B cell (primary cell): ENCODE measurements at regions of chr10 and their contacts with region 1.

Region 1: GRCh38 chr10:93288654-93289634 is 193.2 kb downstream of the MYOF start:
- DNase-seq: peak; percentile 60
- ATAC-seq: no peak
- H3K4me3 ChIP-seq: no peak overlapping the region
- H3K4me3 Mint-ChIP-seq: no peak overlapping the region
- H3K27ac ChIP-seq: no peak overlapping the region
- H3K27ac Mint-ChIP-seq: no peak overlapping the region
- H3K4me1 ChIP-seq: no peaks in the 10 kb centered on the region
- H3K4me1 Mint-ChIP-seq: no peaks in the 10 kb centered on the region
- H3K27me3 ChIP-seq: no peaks in the 10 kb centered on the region
- H3K27me3 Mint-ChIP-seq: no peaks in the 10 kb centered on the region
- CTCF ChIP-seq: peak; percentile 83

Region 2: DNA sequence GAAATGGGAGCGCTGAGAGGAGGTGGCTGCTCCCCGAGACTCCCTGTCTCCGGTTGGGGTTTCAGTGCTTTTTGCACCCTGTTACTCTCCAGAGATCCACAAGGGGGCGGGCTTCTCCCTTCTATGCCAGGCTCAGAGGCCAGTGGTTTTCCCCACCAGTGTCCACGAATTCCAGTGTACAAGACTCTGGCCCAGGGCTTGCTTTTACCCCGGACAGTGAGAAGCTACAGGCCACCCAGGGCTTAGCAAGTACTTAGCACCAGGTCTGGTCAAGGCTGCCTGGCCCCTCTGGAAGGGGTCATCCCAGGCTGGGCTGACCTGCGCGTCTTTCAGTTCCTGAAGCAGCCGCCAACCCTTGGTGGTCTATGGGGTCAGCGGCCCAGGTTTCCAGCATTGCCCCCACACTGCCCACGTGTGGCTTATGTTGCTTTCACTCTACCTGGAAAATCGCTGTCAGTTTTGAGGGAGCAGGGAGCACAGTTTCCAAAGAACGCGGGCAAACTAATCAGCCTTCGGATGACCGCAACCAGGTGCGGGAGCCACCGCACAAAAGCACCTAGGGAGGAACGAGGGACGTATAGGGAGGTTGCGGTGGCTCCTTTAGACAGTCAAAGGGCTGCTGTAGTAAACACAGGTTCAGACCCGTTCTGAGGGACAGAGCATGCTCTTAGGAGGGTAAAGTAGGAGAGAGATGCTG is 208.4 kb before region 1 on chr10:
- CTCF ChIA-PET with region 1: interaction called, 6 read pairs
- POLR2A ChIA-PET with region 1: no interaction called
- intact Hi-C with region 1: loop called (anchors 1 kb)
- DNase-seq: peak; percentile 64
- ATAC-seq: peak; percentile 67
- H3K4me3 ChIP-seq: no peak overlapping the region
- H3K4me3 Mint-ChIP-seq: no peak overlapping the region
- H3K27ac ChIP-seq: no peak overlapping the region
- H3K27ac Mint-ChIP-seq: no peak overlapping the region
- H3K4me1 ChIP-seq: peaks cover 0 to 5% of the 10 kb centered on the region in 2 donors
- H3K4me1 Mint-ChIP-seq: peaks cover 8% of the 10 kb centered on the region
- H3K27me3 ChIP-seq: peaks cover 0 to 28% (median 12%) of the 10 kb centered on the region in 4 experiments
- H3K27me3 Mint-ChIP-seq: peaks cover 51% of the 10 kb centered on the region
- CTCF ChIP-seq: peak; percentile 79

Region 3: DNA sequence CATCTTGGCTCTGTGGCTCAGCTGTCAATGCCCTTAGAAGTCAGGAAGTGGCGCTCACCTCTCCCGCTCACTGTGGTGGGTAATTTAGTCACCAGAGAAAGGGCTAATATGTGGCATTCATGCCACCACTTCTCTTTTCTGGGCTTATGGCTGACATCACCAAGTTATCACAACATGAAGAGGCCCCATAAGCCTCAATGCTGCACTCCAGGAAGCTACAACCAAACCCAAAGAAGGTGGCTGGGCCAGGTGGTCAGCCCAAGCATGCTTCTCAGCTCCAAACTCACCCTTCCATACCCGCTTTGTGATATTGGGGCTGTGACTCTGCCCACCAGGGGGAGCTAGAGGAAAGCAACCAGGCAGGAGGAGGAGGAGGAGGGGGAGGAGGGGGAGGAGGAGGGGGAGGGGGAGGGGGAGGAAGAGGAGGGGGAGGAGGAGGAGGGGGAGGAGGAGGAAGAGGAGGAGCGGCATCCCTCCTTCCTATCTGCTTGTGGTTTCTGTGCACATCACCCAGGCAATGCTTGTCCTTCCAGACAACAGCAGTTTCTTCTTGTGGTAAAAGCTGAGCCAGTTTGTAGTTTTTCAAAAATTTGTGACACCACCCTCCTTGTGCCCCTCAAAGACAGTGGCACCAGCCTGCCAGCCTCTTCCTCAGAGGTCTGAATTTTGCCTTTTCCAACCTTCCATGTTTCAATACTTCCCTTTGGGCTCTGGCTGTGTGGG is 173.1 kb before region 1 on chr10:
- CTCF ChIA-PET with region 1: interaction called, 23 read pairs
- POLR2A ChIA-PET with region 1: interaction called, 6 read pairs
- intact Hi-C with region 1: no loop called
- DNase-seq: peak; percentile 77
- ATAC-seq: peak; percentile 83
- H3K4me3 ChIP-seq: no peak overlapping the region
- H3K4me3 Mint-ChIP-seq: no peak overlapping the region
- H3K27ac ChIP-seq: peak overlapping the region in 1 of 2 donors; percentile 10
- H3K27ac Mint-ChIP-seq: peak overlapping the region; percentile 20
- H3K4me1 ChIP-seq: peaks cover 6 to 12% of the 10 kb centered on the region in 2 donors
- H3K4me1 Mint-ChIP-seq: peaks cover 14% of the 10 kb centered on the region
- H3K27me3 ChIP-seq: peaks cover 0 to 11% (median 4%) of the 10 kb centered on the region in 4 experiments
- H3K27me3 Mint-ChIP-seq: peaks cover 14% of the 10 kb centered on the region
- CTCF ChIP-seq: peak; percentile 20